AG04450 (cell line): ENCODE measurements at regions of chr14 and their contacts with region 1.

Region 1: DNA sequence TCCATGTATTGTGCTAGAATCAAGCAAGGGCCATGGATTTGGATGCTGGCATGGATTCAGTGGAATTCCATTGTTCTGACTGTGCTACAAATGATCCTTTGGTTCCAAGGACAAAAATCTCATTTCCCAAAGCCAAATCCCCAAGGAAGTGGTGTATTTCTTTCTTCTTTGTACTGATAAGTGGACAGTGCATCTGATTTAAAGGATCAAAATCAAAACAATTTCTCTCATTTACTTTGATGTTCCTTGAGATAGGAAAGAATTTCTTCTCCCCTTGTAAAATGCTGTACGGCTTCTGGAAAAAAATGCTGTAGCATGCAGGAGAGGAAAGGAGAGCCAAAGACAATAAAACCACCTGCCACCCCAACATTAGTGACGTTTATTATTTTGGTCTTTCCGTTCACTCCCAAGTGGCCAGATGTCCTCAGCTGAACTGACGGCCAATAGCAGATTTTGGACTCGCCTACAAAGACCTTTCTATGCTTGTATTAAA is 185.7 kb downstream of the PRKD1 start:
- DNase-seq: no peak
- H3K4me3 ChIP-seq: no peak overlapping the region
- H3K27ac ChIP-seq: no peak overlapping the region
- H3K27me3 ChIP-seq: no peaks in the 10 kb centered on the region
- CTCF ChIP-seq: no peak

Region 2: GRCh38 chr14:29759521-29760340 is 17.8 kb after region 1 on chr14:
- CTCF ChIA-PET with region 1: no interaction called
- POLR2A ChIA-PET with region 1: no interaction called
- DNase-seq: no peak
- H3K4me3 ChIP-seq: no peak overlapping the region
- H3K27ac ChIP-seq: no peak overlapping the region
- H3K27me3 ChIP-seq: no peaks in the 10 kb centered on the region
- CTCF ChIP-seq: no peak

Region 3: DNA sequence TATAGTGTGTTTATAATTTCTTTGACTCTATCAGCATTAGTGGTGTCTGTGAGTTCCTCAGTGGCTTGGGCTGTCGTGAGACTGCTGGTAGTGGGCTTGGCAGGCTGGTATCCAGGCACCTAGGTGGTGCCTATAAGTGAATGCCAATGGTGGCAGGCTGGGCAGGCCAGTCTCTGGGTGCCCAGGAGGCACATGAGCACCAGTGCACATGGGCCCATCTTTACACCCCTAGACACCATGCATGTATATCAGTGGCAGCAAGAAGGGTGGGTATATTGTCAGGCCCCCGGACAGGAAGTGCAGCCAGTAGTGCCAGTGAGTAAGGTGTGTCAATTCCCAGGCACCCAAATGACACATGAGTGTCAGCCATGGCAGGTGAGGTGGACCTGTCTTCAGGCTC is 47.5 kb after region 1 on chr14:
- CTCF ChIA-PET with region 1: interaction called, 11 read pairs
- POLR2A ChIA-PET with region 1: no interaction called
- DNase-seq: no peak
- H3K4me3 ChIP-seq: no peak overlapping the region
- H3K27ac ChIP-seq: no peak overlapping the region
- H3K27me3 ChIP-seq: no peaks in the 10 kb centered on the region
- CTCF ChIP-seq: no peak

Region 4: DNA sequence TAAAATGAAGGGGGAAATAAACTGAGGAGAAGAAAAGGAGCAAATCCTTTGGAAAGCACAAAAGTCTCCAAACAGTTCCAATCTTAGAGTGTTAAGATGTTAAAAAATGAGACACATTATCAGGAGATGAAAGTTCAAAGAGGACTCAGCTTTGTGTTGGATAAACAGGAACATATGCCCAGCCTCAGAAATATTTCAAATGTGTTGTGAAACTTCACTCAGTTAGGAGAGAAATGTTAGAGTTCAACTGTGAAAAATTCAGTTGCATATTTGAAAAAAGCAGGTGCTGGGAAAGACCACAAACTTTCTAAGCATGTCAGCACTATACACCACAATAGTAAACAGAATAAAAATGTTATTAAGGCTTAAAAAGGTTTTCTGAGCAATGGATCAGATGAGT is 322.5 kb after region 1 on chr14:
- CTCF ChIA-PET with region 1: no interaction called
- POLR2A ChIA-PET with region 1: no interaction called
- DNase-seq: no peak
- H3K4me3 ChIP-seq: no peak overlapping the region
- H3K27ac ChIP-seq: no peak overlapping the region
- H3K27me3 ChIP-seq: no peaks in the 10 kb centered on the region
- CTCF ChIP-seq: no peak